Thyroid gland (tissue), 4 donors: ENCODE measurements at regions of chr1 and their contacts with region 1.

Region 1: DNA sequence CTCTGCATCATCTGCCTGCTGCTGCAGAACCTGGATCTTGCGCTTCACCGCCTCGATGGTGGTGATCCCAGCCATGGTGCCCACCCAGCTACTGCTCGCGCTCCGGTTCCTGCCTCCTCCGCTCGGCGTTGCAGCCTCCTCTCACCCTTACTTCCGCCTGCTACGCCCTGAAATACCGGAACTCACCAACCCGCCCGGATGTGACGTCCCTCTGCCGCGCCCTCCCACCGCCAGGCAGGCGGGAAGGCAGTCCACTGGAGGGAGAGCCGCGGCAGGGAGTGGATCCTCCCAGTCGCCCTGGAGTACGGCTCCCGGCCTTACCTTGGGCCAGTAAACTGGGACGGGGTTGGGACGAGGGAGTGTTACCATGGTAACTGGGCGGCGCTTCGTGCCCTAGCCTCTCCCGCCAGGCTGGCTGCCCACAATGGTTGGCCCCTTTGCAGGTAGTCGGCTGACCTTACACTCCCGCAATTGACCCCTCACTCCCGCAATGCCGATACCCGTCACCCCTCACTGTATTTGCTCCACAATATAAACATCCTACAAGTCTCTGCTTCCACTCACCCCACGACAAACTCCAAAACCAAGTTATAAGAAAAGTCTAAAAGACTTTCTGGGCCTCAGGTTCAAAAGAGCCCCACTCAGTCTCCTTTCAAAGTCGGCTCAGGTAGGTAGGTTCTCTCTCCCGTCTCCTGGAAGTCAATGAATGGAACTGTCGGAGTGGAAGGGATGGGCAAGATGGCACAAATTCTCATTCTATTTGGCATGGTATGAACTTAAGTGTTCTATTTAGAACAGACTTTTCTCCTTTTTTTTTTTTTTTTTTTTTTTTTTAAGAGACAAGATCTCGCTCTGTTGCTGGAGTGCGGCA is 8.6 kb downstream of the TPM3 start:
- DNase-seq: peak; percentile 98 to 99
- H3K4me3 ChIP-seq: peak overlapping the region; percentile 34 to 94 (median 71)
- H3K27ac ChIP-seq: peak overlapping the region; percentile 66 to 79 (median 73)
- H3K4me1 ChIP-seq: peaks cover 26 to 29% of the 10 kb centered on the region in 2 donors
- H3K27me3 ChIP-seq: no peaks in the 10 kb centered on the region
- CTCF ChIP-seq: peak in 1 of 6 experiments; percentile 11
- POLR2A ChIP-seq: peak; percentile 87 to 99

Region 2: GRCh38 chr1:154220071-154220969 is 37.0 kb after region 1 on chr1 and contains the start of gene UBAP2L:
- intact Hi-C with region 1: loop called (anchors 5 kb)
- DNase-seq: peak; percentile 99
- H3K4me3 ChIP-seq: peak within 1 kb of the TSS; percentile 91 to 97 (median 97)
- H3K27ac ChIP-seq: peak within 1 kb of the TSS; percentile 97 to 100 (median 99)
- H3K4me1 ChIP-seq: peaks cover 35 to 36% of the 10 kb centered on the region in 2 donors
- H3K27me3 ChIP-seq: no peaks in the 10 kb centered on the region
- CTCF ChIP-seq: peak in 1 of 6 experiments; percentile 9
- POLR2A ChIP-seq: peak in 1 of 2 donors; percentile 89
- total RNA-seq, gene UBAP2L: 57.8 to 102 (median 88.8) TPM

Region 3: GRCh38 chr1:154371436-154371835 is 188.2 kb after region 1 on chr1:
- intact Hi-C with region 1: no loop called
- DNase-seq: no peak
- H3K4me3 ChIP-seq: no peak overlapping the region
- H3K27ac ChIP-seq: no peak overlapping the region
- H3K4me1 ChIP-seq: no peaks in the 10 kb centered on the region
- H3K27me3 ChIP-seq: no peaks in the 10 kb centered on the region
- CTCF ChIP-seq: no peak
- POLR2A ChIP-seq: no peak

Region 4: DNA sequence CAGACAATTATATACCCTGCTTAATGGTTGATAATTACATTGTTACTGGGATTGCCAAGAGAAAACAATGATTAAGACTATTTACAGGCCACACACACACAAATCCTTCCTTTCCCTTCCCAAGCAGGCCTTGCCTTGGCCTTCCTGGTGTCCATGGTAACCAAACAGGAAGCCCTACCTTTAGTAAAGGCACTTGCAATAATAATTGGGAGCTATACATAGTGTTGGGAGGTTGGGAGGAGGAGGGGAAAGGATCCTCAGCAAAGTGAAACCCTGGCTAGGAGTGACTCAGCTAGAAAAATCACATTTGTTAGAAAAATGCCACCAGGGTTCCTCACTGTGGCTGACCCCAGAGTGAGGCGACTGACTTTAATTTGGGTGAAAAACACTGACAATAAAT is 547.0 kb after region 1 on chr1:
- intact Hi-C with region 1: no loop called
- DNase-seq: no peak
- H3K4me3 ChIP-seq: no peak overlapping the region
- H3K27ac ChIP-seq: peak overlapping the region in 2 of 3 donors; percentile 55 to 61
- H3K4me1 ChIP-seq: peaks cover 0 to 10% of the 10 kb centered on the region in 2 donors
- H3K27me3 ChIP-seq: no peaks in the 10 kb centered on the region
- CTCF ChIP-seq: no peak
- POLR2A ChIP-seq: no peak